Sciatic nerve (tissue), 2 donors: ENCODE measurements at regions of chr11 and their contacts with region 1.

Region 1: DNA sequence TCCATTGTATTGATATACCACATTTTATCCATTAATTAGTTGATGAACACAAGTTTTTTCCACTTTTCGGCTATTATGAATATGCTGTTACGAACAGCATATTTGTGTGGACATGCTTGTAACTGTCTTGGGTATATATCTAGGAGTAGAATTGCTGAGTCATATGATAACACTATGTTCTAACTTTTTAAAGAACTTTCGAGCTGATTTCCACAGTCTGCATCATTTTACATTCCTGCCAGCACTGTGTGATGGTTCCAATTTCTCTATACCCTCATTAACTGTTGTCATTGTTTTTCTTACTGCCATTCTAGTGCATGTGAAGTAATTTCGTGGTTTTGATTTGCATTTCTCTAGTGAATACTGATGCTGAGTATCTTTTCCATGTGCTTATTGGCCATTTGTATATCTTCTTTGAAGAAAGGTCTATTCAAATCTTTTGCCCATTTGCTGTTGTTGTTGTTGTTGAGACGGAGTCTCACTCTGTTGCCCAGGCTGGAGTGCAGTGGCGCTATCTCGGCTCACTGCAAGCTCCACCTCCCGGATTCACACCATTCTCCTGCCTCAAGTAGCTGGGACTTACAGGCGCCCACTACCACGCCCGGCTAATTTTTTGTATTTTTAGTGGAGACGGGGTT is 7.4 kb upstream of the RCE1 start:
- DNase-seq: no peak
- ATAC-seq: no peak

Region 2: DNA sequence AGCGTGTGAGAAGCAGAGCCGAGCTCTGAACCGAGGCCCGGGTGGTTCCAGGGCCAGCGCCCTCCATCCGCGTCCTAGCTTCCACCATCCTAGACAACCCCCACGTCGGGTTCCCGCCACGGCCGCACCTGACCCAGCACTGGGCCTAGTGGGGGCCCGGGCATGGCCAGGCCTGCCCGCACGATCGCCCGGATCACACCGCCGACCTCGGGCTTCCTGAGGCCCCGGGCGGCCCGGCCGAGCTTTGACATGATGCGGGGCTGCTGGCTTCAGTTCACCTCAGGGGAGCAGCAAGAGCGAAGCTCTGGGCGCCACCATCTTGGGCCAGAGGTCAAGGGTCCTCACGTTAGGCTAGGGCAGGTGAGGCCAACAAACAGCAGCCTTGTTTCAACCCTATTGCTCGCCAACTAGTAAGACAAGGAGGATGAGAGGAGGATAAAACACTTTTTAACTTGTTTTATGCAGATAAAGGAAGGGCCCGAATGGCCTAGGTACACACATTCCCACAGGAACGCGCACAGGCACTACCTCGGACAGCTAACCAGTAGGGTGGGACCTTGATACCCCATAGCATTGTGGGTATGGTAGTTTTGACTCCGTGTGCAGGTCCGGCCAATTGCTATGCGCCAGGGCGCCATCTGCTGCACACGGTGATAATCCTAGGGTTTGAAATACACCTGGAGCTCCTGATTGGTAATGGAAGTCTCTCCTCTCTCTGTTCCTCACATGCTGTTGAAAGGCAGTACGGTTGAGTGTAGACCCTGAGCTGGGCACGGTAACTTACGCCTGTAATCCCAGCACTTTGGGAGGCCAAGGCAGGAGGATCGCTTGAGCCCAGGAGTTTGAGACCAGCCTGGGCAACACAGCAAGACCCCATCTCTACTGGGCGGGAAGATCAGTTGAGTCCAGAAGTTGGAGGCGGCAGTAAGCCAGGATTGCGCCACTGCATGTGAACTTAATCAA is 397.1 kb before region 1 on chr11 and contains the start of gene MRPL11:
- intact Hi-C with region 1: loop called (anchors 10 kb)
- DNase-seq: peak; percentile 90
- ATAC-seq: peak; percentile 100
- total RNA-seq, gene MRPL11: 25.1 TPM

Region 3: DNA sequence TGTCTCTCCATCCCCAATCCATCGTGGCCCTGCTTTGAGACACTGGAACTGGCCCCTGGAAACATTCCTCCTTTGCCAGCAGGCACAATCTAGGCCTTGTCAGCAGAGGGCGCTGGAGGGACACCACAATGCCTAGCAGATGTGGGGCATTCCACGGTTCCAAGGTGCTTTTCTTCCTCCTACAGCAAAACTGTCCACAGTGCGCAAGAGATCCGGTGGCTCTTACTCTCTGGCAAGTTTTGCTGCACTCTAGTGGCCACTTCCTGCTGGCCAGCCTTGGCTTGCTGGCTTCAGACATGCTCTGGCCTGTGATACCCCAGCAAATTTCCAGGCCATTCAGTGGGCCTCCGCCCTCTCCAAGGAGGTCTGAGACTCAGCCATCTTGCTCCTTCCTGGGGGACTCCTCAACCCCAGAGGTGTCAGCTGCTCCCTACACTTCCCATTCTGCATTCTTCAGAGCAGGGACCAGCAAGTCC is 141.1 kb before region 1 on chr11:
- intact Hi-C with region 1: loop called (anchors 5 kb)
- DNase-seq: peak; percentile 92
- ATAC-seq: peak; percentile 93